Activated B cell treated with CpG ODN at 0.5 μM for 24 hours (primary cell): ENCODE measurements at regions of chr2 and their contacts with region 1.

Region 1: DNA sequence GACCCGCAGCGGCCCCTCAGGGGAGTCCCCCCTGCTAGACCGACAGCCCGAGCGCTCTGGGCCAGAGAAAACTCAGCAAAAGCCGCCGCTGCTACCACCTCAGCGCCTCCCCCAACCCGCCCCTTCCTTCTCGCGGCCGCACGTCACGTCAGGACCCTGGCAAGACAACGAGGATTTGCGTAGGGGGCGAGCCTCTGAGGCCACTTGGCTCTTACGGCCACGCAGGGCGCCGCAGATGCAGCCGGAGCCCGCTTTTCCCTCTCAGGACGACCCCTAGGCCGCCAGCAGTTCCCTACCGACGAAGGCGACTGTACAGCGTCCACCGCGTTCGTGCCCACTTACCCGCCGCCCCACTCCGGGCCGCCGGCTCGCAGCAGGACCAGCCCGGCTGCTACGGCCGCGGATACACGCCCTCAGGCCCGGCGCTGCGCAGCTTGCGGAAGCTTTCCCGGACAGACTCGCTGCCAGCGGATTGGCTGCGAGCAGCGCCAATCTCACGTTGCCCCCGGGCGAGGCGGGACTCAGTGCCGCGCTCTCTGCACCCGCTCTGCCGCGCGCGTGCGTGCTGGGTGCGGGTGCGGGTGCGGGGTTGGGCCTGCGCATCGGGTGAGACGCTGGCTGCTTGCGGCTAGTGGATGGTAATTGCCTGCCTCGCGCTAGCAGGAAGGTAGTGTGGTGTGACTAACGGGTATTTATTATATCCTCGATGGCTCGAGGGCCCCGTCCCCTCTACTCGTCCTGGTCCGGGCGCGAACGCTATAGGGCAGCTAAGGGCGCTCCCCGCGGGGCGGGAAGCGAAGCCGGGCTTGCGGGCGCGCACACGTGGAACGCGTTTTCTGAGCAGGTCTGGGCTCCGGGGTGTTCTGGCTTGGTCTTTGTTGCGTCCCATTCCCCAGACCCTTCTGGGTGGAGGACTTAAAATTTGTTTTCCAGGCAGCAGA is at the starts of genes ORMDL1 and PMS1:
- DNase-seq: peak; percentile 95
- ATAC-seq: peak; percentile 90
- H3K4me3 Mint-ChIP-seq: peak within 1 kb of the TSS; percentile 94
- H3K27ac Mint-ChIP-seq: peak within 1 kb of the TSS; percentile 96
- H3K4me1 Mint-ChIP-seq: peaks cover 45% of the 10 kb centered on the region
- H3K27me3 Mint-ChIP-seq: no peaks in the 10 kb centered on the region
- CTCF ChIP-seq: no peak
- total RNA-seq, gene ORMDL1: 80.5 and 92.6 TPM in 2 replicates
- total RNA-seq, gene PMS1: 32.7 and 39.0 TPM in 2 replicates

Region 2: GRCh38 chr2:189674374-189675112 is 109.7 kb before region 1 on chr2 and contains the start of gene ANKAR:
- CTCF ChIA-PET with region 1: interaction called, 4 read pairs
- POLR2A ChIA-PET with region 1: interaction called, 21 read pairs
- intact Hi-C with region 1: loop called (anchors 1 kb)
- DNase-seq: peak; percentile 89
- ATAC-seq: peak; percentile 97
- H3K4me3 Mint-ChIP-seq: peak within 1 kb of the TSS; percentile 96
- H3K27ac Mint-ChIP-seq: peak within 1 kb of the TSS; percentile 99
- H3K4me1 Mint-ChIP-seq: peaks cover 38% of the 10 kb centered on the region
- H3K27me3 Mint-ChIP-seq: no peaks in the 10 kb centered on the region
- CTCF ChIP-seq: peak; percentile 67
- total RNA-seq, gene ANKAR: 13.1 and 14.5 TPM in 2 replicates

Region 3: DNA sequence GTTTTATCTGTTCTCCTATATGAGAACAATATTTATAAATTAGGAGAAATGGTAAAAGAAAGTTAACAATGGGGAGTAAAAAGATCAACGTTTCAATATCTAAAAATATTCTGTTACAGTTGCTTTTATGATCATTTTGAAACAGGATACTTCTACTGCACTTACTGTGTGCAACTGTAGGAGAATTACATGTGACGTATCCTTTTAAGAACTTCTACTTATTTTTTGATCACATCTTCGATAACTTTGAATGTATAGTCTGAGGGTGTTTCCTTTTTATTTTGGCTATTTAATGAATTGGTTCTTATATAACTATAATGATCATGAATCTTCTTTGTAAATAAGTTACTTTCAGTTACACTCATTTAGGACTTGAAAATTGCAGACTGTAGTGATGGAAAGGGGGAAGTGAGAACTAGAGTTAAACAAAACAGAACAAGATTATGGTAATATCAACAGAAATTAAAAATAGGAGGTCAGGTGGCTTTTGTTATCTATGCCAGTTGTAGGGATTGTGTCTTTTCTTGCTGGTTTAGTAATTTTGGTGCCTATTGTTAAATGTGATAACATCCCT is 168.4 kb after region 1 on chr2:
- CTCF ChIA-PET with region 1: no interaction called
- POLR2A ChIA-PET with region 1: interaction called, 4 read pairs
- intact Hi-C with region 1: loop called (anchors 2 kb)
- DNase-seq: no peak
- ATAC-seq: peak; percentile 70
- H3K4me3 Mint-ChIP-seq: peak overlapping the region; percentile 54
- H3K27ac Mint-ChIP-seq: peak overlapping the region; percentile 80
- H3K4me1 Mint-ChIP-seq: peaks cover 33% of the 10 kb centered on the region
- H3K27me3 Mint-ChIP-seq: no peaks in the 10 kb centered on the region
- CTCF ChIP-seq: no peak

Region 4: GRCh38 chr2:190283783-190284182 is 499.6 kb after region 1 on chr2:
- CTCF ChIA-PET with region 1: no interaction called
- POLR2A ChIA-PET with region 1: no interaction called
- intact Hi-C with region 1: no loop called
- DNase-seq: no peak
- ATAC-seq: no peak
- H3K4me3 Mint-ChIP-seq: no peak overlapping the region
- H3K27ac Mint-ChIP-seq: no peak overlapping the region
- H3K4me1 Mint-ChIP-seq: no peaks in the 10 kb centered on the region
- H3K27me3 Mint-ChIP-seq: no peaks in the 10 kb centered on the region
- CTCF ChIP-seq: no peak

Region 5: DNA sequence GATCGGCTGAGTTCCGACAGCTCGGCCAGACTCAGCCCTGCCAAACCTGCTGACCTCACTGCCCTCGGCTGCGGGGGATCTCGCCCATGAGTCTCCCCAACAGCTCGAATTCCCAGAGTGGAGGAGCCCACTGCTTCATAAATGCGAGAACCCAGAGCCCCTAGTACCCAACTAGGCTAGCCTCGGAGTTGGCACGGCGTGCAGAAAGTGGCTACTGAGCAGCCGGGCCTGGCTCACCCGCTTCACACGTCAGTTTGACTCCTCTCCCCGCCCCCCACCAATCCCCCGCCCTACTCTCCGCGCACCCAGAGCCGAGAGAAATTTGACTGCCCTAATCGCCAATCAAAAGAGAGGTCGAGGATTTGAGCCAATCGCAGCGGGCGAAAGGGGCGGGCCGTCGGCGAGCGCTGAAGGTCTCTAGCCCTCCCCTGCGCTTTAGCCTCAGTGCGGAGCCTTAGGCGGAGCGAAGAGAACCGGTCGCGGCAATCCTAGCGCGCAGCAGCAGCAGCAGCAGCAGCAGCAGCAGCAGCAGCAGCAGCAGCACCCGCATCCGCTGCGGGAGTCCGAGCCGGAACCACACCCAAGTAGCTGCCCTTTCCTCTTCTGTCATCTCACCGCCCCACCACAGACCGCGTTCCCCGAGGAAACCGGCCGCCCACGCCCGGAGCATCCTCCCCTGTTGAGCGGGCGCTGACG is 1096.3 kb after region 1 on chr2 and contains the start of gene GLS:
- CTCF ChIA-PET with region 1: no interaction called
- POLR2A ChIA-PET with region 1: interaction called, 7 read pairs
- intact Hi-C with region 1: loop called (anchors 5 kb)
- DNase-seq: peak; percentile 90
- ATAC-seq: peak; percentile 82
- H3K4me3 Mint-ChIP-seq: peak within 1 kb of the TSS; percentile 97
- H3K27ac Mint-ChIP-seq: peak within 1 kb of the TSS; percentile 97
- H3K4me1 Mint-ChIP-seq: peaks cover 44% of the 10 kb centered on the region
- H3K27me3 Mint-ChIP-seq: no peaks in the 10 kb centered on the region
- CTCF ChIP-seq: no peak
- total RNA-seq, gene GLS: 212 and 255 TPM in 2 replicates